ENCODE measurements at regions of chr3 and their contacts with region 1.

Region 1: GRCh38 chr3:71006810-71007785 is 576.4 kb downstream of the FOXP1 start:
- DNase-seq: peak; percentile 22 to 48 (median 35)
- ATAC-seq: peak; percentile 67
- H3K4me3 ChIP-seq: no peak overlapping the region
- H3K27ac ChIP-seq: peak overlapping the region in 3 of 4 donors; percentile 42 to 51 (median 43)
- H3K4me1 ChIP-seq: peaks cover 51% of the 10 kb centered on the region
- H3K27me3 ChIP-seq: no peaks in the 10 kb centered on the region
- CTCF ChIP-seq: peak; percentile 30 to 67 (median 49)
- POLR2A ChIP-seq: no peak

Region 2: DNA sequence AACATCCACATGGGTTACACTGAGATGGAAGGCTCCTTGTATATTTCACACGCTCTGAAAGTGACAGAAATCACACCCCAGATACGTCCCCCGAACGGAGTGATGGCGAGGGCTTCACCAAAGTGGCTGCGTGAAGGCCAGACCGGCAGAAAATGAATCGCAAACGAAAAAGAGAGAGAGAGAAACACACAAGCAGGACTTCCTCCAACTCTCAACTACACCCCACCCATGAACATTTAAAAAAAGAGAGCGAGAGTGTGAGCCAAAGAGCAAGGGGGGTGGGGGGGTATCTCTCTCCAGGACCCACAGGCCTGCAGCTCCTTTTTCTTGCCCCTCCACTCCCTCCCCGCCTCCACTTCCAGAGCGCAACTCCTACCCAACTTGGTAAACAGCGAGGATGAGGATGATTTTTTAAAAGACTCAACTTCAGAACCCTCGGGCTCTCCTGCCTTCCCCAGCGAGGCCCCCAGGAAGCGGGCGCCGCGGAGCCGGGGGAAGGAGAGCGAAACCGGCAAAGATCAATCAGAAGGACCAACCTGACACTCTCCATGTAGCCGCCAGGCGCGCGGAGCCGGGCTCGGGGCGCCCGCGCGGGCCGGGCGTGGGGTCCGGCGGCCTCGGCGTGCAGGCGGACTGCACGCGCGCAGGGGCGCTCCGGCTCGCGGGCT is 57.3 kb after region 1 on chr3:
- intact Hi-C with region 1: no loop called
- DNase-seq: peak in 3 of 4 donors; percentile 51 to 56 (median 56)
- ATAC-seq: peak; percentile 65
- H3K4me3 ChIP-seq: peak overlapping the region; percentile 51 to 77
- H3K27ac ChIP-seq: peak overlapping the region; percentile 90 to 99 (median 96)
- H3K4me1 ChIP-seq: peaks cover 62% of the 10 kb centered on the region
- H3K27me3 ChIP-seq: no peaks in the 10 kb centered on the region
- CTCF ChIP-seq: peak in 4 of 7 experiments; percentile 5 to 44 (median 37)
- POLR2A ChIP-seq: peak in 2 of 3 donors; percentile 37 to 45

Region 3: GRCh38 chr3:71599416-71599815 is 592.3 kb after region 1 on chr3:
- intact Hi-C with region 1: loop called (anchors 10 kb)
- DNase-seq: no peak
- ATAC-seq: no peak
- H3K4me3 ChIP-seq: no peak overlapping the region
- H3K27ac ChIP-seq: no peak overlapping the region
- H3K4me1 ChIP-seq: peaks cover 6% of the 10 kb centered on the region
- H3K27me3 ChIP-seq: no peaks in the 10 kb centered on the region
- CTCF ChIP-seq: no peak
- POLR2A ChIP-seq: no peak

Measured in body of pancreas (tissue), 4 donors.